IMR-90 (cell line): ENCODE measurements at regions of chr17 and their contacts with region 1.

Region 1: DNA sequence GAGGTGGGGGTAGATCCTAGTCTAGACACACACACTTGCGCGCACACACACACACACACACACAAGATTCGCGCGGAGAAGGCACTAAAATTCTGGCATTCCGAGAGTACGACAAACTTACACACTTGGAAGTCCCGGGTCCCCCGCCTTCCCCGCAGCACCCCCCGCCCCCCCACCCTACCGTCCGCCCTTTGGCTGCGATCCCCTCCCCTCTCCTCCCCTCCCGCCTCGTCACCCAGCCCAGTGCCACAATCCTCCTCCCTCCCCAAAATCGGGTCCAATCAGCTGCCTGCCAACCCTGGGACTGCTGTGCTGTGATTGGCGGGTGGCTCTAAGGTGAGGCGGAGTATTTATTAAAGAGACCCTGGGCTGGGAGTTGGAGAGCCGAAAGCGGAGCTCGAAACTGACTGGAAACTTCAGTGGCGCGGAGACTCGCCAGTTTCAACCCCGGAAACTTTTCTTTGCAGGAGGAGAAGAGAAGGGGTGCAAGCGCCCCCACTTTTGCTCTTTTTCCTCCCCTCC is at the start of gene SOX9:
- DNase-seq: peak; percentile 96
- ATAC-seq: peak; percentile 77
- H3K4me3 ChIP-seq: peak within 1 kb of the TSS; percentile 95
- H3K27ac ChIP-seq: peak within 1 kb of the TSS; percentile 96
- H3K4me1 ChIP-seq: peaks cover 16% of the 10 kb centered on the region
- H3K27me3 ChIP-seq: peaks cover 11% of the 10 kb centered on the region; the same call in 1 of the 2 replicates
- CTCF ChIP-seq: no peak
- POLR2A ChIP-seq: peak; percentile 98
- RAD21 ChIP-seq: peak; percentile 9; the same call in 1 of the 2 replicates
- total RNA-seq, gene SOX9: 4.1 and 8.3 TPM in 2 replicates

Region 2: GRCh38 chr17:70636517-70637133 is 1484.1 kb before region 1 on chr17:
- CTCF ChIA-PET with region 1: no interaction called
- POLR2A ChIA-PET with region 1: no interaction called
- dilution Hi-C with region 1: no loop called
- in situ Hi-C with region 1: no loop called
- intact Hi-C with region 1: loop called (anchors 1 kb)
- DNase-seq: peak; percentile 46
- ATAC-seq: peak; percentile 70
- H3K4me3 ChIP-seq: no peak overlapping the region
- H3K27ac ChIP-seq: no peak overlapping the region
- H3K4me1 ChIP-seq: no peaks in the 10 kb centered on the region
- H3K27me3 ChIP-seq: peaks cover 7% of the 10 kb centered on the region; the same call in 1 of the 2 replicates
- CTCF ChIP-seq: peak; percentile 73
- POLR2A ChIP-seq: no peak
- RAD21 ChIP-seq: peak; percentile 79

Region 3: DNA sequence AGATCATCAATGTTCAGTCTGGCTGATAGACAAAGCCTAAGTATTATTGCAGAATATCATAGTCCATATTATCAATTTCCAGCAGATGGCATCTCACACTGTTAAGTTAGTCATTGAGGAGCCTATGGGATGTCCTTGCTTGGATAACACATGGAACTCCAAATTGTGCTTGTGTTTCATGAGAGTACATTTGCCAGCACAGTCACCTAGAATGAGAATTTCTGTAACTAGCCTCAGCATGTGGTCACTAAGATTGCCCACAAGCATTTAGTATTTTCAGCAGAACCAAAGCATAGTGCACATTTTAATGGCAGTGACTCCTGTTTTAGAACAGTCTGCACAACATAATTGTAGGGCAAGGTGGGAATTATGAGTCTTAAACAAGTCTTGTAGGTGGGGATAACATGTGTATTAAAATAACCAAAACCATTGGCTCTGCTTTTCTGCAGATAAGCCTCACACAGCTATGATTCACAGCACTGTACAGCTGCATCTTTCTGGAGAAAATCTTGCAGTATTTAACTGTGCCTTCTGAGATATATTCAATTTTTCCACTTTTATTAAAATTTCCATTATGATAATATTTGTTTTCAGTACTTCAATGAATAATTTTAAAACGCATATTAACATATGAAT is 882.7 kb before region 1 on chr17:
- CTCF ChIA-PET with region 1: no interaction called
- POLR2A ChIA-PET with region 1: no interaction called
- dilution Hi-C with region 1: no loop called
- in situ Hi-C with region 1: loop called (anchors 10 kb)
- intact Hi-C with region 1: loop called (anchors 2 kb)
- DNase-seq: peak; percentile 53
- ATAC-seq: peak; percentile 83
- H3K4me3 ChIP-seq: no peak overlapping the region
- H3K27ac ChIP-seq: no peak overlapping the region
- H3K4me1 ChIP-seq: peaks cover 2% of the 10 kb centered on the region; the same call in 1 of the 2 replicates
- H3K27me3 ChIP-seq: no peaks in the 10 kb centered on the region
- CTCF ChIP-seq: peak; percentile 48
- POLR2A ChIP-seq: no peak
- RAD21 ChIP-seq: peak; percentile 70

Region 4: GRCh38 chr17:71649941-71650350 is 470.8 kb before region 1 on chr17:
- CTCF ChIA-PET with region 1: no interaction called
- POLR2A ChIA-PET with region 1: no interaction called
- dilution Hi-C with region 1: no loop called
- in situ Hi-C with region 1: no loop called
- intact Hi-C with region 1: loop called (anchors 5 kb)
- DNase-seq: peak; percentile 86
- ATAC-seq: peak; percentile 92
- H3K4me3 ChIP-seq: no peak overlapping the region
- H3K27ac ChIP-seq: peak overlapping the region; percentile 56; the same call in 1 of the 2 replicates
- H3K4me1 ChIP-seq: peaks cover 8% of the 10 kb centered on the region
- H3K27me3 ChIP-seq: no peaks in the 10 kb centered on the region
- CTCF ChIP-seq: no peak
- POLR2A ChIP-seq: no peak
- RAD21 ChIP-seq: no peak

Region 5: GRCh38 chr17:72191921-72192799 is 71.5 kb after region 1 on chr17:
- CTCF ChIA-PET with region 1: no interaction called
- POLR2A ChIA-PET with region 1: no interaction called
- dilution Hi-C with region 1: no loop called
- in situ Hi-C with region 1: no loop called
- intact Hi-C with region 1: loop called (anchors 1 kb)
- DNase-seq: peak; percentile 98
- ATAC-seq: peak; percentile 90
- H3K4me3 ChIP-seq: no peak overlapping the region
- H3K27ac ChIP-seq: peak overlapping the region; percentile 67
- H3K4me1 ChIP-seq: peaks cover 22% of the 10 kb centered on the region
- H3K27me3 ChIP-seq: no peaks in the 10 kb centered on the region
- CTCF ChIP-seq: no peak
- POLR2A ChIP-seq: no peak
- RAD21 ChIP-seq: peak; percentile 24; the same call in 1 of the 2 replicates

Region 6: DNA sequence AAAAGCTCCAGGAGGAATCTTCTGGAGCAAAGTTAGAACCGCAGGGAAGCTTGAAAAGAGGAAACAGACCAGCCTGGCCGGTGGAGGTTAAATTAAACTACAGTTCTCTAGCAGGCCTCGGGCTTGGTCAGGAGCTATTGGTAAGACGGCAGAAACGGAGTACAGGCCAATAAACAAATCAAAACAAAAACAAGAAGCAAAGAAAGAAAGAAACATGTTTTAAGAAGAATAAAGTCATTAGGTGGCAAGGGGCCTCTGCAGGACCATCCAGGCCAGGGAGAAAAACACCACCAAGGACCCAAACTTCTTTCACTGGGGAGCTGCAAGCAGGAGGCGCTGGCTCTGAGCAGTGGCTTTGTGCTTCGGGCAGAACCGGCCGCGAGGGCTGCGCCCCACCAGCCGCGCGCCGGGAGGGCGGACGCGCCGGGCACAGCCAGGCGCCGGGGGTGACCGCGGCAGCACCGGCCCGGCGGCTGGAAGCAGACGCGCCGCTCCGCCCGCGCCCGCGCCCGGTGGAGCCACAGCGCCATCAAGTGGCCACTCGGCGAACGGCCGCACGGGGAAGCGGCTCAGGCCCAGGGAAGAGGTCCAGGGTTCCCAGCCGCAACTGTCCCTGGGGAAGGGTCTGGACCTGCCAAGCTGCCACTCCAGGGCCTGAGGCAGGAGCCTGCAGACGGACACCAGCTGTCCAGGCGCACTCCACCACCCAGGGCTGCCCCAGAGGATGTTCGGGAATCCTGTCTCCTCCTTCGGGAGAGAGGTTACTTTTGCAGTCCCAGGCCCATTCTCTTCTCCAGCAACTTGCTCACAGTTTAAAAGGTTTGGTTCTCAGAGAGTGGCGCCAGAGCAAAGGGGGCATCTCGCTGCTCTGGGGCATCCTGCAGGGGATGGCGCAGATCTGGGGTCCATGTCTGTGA is 419.5 kb after region 1 on chr17:
- CTCF ChIA-PET with region 1: interaction called, 9 read pairs
- POLR2A ChIA-PET with region 1: interaction called, 10 read pairs
- dilution Hi-C with region 1: no loop called
- in situ Hi-C with region 1: no loop called
- intact Hi-C with region 1: loop called (anchors 1 kb)
- DNase-seq: peak; percentile 61
- ATAC-seq: peak; percentile 98
- H3K4me3 ChIP-seq: peak overlapping the region; percentile 10; the same call in 1 of the 2 replicates
- H3K27ac ChIP-seq: peak overlapping the region; percentile 87
- H3K4me1 ChIP-seq: peaks cover 3% of the 10 kb centered on the region; the same call in 1 of the 2 replicates
- H3K27me3 ChIP-seq: no peaks in the 10 kb centered on the region
- CTCF ChIP-seq: peak; percentile 90
- POLR2A ChIP-seq: no peak; the same call in 1 of the 2 replicates
- RAD21 ChIP-seq: peak; percentile 95